Natural killer cell (primary cell): ENCODE measurements at regions of chr22 and their contacts with region 1.

Region 1: GRCh38 chr22:21867528-21868266 is at the start of gene MAPK1:
- DNase-seq: peak; percentile 95
- ATAC-seq: peak; percentile 88 to 97 (median 90)
- H3K4me3 ChIP-seq: peak within 1 kb of the TSS; percentile 88
- H3K4me3 Mint-ChIP-seq: peak within 1 kb of the TSS; percentile 98
- H3K27ac ChIP-seq: peak within 1 kb of the TSS; percentile 99
- H3K27ac Mint-ChIP-seq: peak within 1 kb of the TSS; percentile 94 to 96
- H3K4me1 ChIP-seq: peaks cover 32% of the 10 kb centered on the region
- H3K4me1 Mint-ChIP-seq: peaks cover 50 to 54% of the 10 kb centered on the region in 2 donors
- H3K27me3 ChIP-seq: no peaks in the 10 kb centered on the region
- H3K27me3 Mint-ChIP-seq: no peaks in the 10 kb centered on the region
- CTCF ChIP-seq: peak; percentile 32
- total RNA-seq, gene MAPK1: 189 to 246 (median 214) TPM

Region 2: GRCh38 chr22:21712894-21713712 is 154.6 kb before region 1 on chr22:
- intact Hi-C with region 1: loop called (anchors 5 kb)
- DNase-seq: peak; percentile 59 to 82
- ATAC-seq: peak; percentile 83 to 98 (median 95)
- H3K4me3 ChIP-seq: no peak overlapping the region
- H3K4me3 Mint-ChIP-seq: no peak overlapping the region
- H3K27ac ChIP-seq: no peak overlapping the region
- H3K27ac Mint-ChIP-seq: peak overlapping the region; percentile 76 to 80
- H3K4me1 ChIP-seq: peaks cover 7% of the 10 kb centered on the region
- H3K4me1 Mint-ChIP-seq: peaks cover 21 to 23% of the 10 kb centered on the region in 2 donors
- H3K27me3 ChIP-seq: no peaks in the 10 kb centered on the region
- H3K27me3 Mint-ChIP-seq: no peaks in the 10 kb centered on the region
- CTCF ChIP-seq: peak; percentile 74

Region 3: DNA sequence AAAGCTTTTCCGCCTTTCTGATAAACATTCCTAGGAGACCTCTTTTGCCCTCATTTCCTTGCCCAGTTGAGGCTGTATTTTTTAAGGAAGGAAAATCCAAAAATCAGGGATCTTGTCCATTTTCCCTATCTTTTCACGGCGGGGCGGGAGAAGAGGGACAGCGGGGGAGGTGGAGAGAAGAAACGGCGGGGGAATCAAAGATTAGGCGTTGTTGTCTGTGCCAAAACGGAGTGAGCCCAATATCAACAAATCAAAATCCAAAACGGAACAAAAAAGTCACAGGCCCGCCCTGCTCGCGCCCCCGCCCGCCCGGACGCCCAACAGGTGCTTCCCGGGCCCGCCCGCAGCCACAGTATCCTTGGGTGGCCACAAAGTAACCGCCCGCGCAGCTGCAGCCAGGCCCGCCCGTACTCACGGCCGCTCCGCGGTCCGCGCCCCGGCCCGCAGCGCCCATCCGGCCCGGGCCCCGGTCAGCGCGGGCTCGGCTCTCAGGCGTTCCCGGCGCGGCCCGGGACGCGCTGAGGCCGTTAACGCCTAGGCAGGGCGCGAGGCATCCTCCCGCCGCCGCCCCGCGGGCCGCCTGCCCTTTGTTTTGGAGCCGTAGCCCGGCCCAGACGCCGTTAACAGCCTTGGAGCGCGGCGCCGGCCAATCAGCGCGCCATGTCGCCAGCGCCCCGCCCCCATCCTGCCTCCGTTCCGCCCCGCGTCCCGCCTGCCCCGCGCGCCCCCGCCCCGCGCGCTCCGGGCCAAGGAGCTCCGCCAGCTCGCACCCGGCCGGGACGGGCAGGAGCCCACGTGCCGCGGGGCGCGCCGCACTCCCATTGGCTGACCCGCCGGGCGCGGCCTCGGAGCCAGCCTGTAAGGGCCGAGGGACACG is 132.3 kb before region 1 on chr22 and contains the start of gene YPEL1:
- intact Hi-C with region 1: loop called (anchors 2 kb)
- DNase-seq: peak; percentile 97 to 99
- ATAC-seq: peak; percentile 85 to 97 (median 89)
- H3K4me3 ChIP-seq: peak within 1 kb of the TSS; percentile 66
- H3K4me3 Mint-ChIP-seq: peak within 1 kb of the TSS; percentile 97
- H3K27ac ChIP-seq: peak within 1 kb of the TSS; percentile 82
- H3K27ac Mint-ChIP-seq: peak within 1 kb of the TSS; percentile 95 to 96
- H3K4me1 ChIP-seq: peaks cover 63% of the 10 kb centered on the region
- H3K4me1 Mint-ChIP-seq: peaks cover 65 to 71% of the 10 kb centered on the region in 2 donors
- H3K27me3 ChIP-seq: no peaks in the 10 kb centered on the region
- H3K27me3 Mint-ChIP-seq: no peaks in the 10 kb centered on the region
- CTCF ChIP-seq: no peak
- total RNA-seq, gene YPEL1: 59.9 to 86.3 (median 68.8) TPM

Region 4: GRCh38 chr22:21816787-21817496 is 50.8 kb before region 1 on chr22:
- intact Hi-C with region 1: loop called (anchors 2 kb)
- DNase-seq: peak; percentile 33 to 87
- ATAC-seq: peak; percentile 89 to 94 (median 90)
- H3K4me3 ChIP-seq: no peak overlapping the region
- H3K4me3 Mint-ChIP-seq: peak overlapping the region; percentile 88
- H3K27ac ChIP-seq: peak overlapping the region; percentile 88
- H3K27ac Mint-ChIP-seq: peak overlapping the region; percentile 93 to 97
- H3K4me1 ChIP-seq: peaks cover 61% of the 10 kb centered on the region
- H3K4me1 Mint-ChIP-seq: peaks cover 70 to 78% of the 10 kb centered on the region in 2 donors
- H3K27me3 ChIP-seq: no peaks in the 10 kb centered on the region
- H3K27me3 Mint-ChIP-seq: no peaks in the 10 kb centered on the region
- CTCF ChIP-seq: no peak

Region 5: DNA sequence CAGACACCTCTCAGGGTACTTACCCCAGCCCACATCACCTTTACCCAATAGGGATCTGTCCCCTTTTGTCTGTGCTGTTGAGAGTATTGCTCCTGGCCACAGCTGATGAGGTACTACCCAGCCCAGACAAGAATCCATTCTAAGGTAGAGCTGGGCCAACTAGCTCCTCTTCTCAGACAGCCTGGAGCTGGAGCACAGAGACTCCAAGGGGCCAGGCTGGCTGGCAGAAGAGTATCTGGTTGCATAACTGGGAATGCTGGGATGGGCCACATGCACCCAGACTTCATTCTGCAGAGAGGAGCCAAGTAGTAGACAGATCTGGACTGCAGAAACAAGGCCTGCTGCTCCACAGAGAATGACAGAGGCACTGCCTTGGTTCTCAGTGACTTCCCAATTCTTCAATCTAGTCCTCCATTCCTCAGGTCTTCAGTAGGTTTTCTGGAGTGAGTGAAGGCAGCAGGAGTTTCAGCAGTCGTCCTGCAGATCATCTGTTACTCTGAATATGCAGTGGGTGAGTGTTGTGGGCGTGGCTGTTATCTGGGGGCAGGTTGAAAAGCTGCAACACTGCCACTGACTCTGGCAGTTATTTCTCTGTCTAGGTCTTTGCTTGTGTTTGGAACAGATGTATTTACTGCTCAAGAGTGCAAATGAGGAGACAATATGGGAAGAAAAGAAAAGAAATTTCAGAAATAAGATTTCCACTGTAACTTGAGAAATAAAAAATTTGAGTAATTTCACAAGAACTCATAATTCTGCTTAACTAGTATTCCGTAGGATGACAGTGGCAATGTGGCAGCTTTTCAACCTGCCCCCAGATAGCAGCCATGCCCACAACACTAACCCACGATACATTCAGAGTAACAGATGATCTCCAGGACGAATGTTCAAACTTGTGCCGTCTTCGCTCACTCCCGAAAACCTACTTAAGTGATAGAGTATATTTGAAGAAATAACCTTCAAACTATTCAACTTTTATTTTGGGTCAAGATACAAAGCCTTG is 35.1 kb before region 1 on chr22:
- intact Hi-C with region 1: loop called (anchors 5 kb)
- DNase-seq: peak; percentile 39 to 42
- ATAC-seq: peak; percentile 86 to 93 (median 88)
- H3K4me3 ChIP-seq: no peak overlapping the region
- H3K4me3 Mint-ChIP-seq: peak overlapping the region; percentile 77
- H3K27ac ChIP-seq: peak overlapping the region; percentile 26
- H3K27ac Mint-ChIP-seq: peak overlapping the region; percentile 60 to 80
- H3K4me1 ChIP-seq: peaks cover 31% of the 10 kb centered on the region
- H3K4me1 Mint-ChIP-seq: peaks cover 80 to 83% of the 10 kb centered on the region in 2 donors
- H3K27me3 ChIP-seq: no peaks in the 10 kb centered on the region
- H3K27me3 Mint-ChIP-seq: no peaks in the 10 kb centered on the region
- CTCF ChIP-seq: no peak

Region 6: DNA sequence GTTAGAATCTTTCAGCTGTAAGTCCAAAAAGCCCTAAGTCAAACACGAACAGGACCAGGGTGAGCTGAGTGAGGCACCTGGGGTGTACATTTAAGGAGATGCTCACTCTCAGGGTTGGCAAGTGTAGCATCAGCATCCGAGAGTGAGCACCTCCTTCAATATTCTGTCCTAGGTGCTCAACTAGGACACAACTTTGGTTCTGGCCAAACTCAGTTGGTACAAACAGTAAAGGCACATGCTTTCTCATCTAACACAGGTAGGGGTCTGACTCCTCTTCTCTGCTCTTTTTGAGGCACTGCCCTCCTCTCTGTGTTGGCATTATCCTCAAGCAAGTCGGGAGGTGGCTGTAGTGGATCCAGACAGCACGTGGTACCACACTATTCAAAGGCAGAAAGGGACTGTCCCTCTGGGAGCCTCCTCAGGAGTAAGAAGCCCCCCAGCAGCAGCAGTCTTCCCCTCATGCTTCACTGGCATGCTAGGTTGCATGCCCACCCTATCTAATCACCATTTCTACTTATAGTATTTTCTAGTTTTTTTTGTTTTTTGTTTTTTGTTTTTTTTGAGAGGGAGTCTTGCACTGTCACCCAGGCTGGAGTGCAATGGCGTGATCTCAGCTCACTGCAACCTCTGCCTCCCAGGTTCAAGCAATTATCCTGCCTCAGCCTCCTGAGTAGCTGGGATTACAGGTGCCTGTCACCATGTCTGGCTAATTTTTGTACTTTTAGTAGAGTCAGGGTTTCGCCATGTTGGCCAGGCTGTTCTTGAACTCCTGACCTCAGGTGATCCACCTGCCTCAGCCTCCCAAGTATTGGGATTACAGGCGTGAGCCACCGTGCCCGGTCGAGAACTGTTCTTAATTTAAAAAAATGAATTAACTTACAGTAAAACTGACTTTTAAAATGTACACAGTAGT is 14.4 kb after region 1 on chr22:
- intact Hi-C with region 1: no loop called
- DNase-seq: no peak
- ATAC-seq: no peak
- H3K4me3 ChIP-seq: no peak overlapping the region
- H3K4me3 Mint-ChIP-seq: no peak overlapping the region
- H3K27ac ChIP-seq: no peak overlapping the region
- H3K27ac Mint-ChIP-seq: no peak overlapping the region
- H3K4me1 ChIP-seq: no peaks in the 10 kb centered on the region
- H3K4me1 Mint-ChIP-seq: peaks cover 0 to under 1% of the 10 kb centered on the region in 2 donors
- H3K27me3 ChIP-seq: no peaks in the 10 kb centered on the region
- H3K27me3 Mint-ChIP-seq: no peaks in the 10 kb centered on the region
- CTCF ChIP-seq: no peak

Region 7: GRCh38 chr22:22168190-22168940 is 300.7 kb after region 1 on chr22:
- intact Hi-C with region 1: no loop called
- DNase-seq: peak in 1 of 2 donors; percentile 64
- ATAC-seq: peak; percentile 51 to 52 (median 52)
- H3K4me3 ChIP-seq: peak overlapping the region; percentile 13
- H3K4me3 Mint-ChIP-seq: peak overlapping the region; percentile 77
- H3K27ac ChIP-seq: peak overlapping the region; percentile 80
- H3K27ac Mint-ChIP-seq: peak overlapping the region; percentile 73 to 82
- H3K4me1 ChIP-seq: peaks cover 41% of the 10 kb centered on the region
- H3K4me1 Mint-ChIP-seq: peaks cover 16 to 17% of the 10 kb centered on the region in 2 donors
- H3K27me3 ChIP-seq: no peaks in the 10 kb centered on the region
- H3K27me3 Mint-ChIP-seq: no peaks in the 10 kb centered on the region
- CTCF ChIP-seq: no peak